ENCODE measurements at regions of chr10 and their contacts with region 1.

Region 1: GRCh38 chr10:77179015-77179695 is 458.5 kb downstream of the KCNMA1 start:
- DNase-seq: peak in 1 of 2 donors; percentile 89
- H3K4me3 ChIP-seq: no peak overlapping the region
- H3K27ac ChIP-seq: peak overlapping the region; percentile 59 to 67
- H3K4me1 ChIP-seq: peaks cover 7 to 22% of the 10 kb centered on the region in 2 donors
- H3K27me3 ChIP-seq: no peaks in the 10 kb centered on the region
- CTCF ChIP-seq: no peak

Region 2: GRCh38 chr10:77236700-77237099 is 57.5 kb after region 1 on chr10:
- intact Hi-C with region 1: loop called (anchors 5 kb)
- DNase-seq: no peak
- H3K4me3 ChIP-seq: no peak overlapping the region
- H3K27ac ChIP-seq: peak overlapping the region in 1 of 2 donors; percentile 78
- H3K4me1 ChIP-seq: peaks cover 8 to 58% of the 10 kb centered on the region in 2 donors
- H3K27me3 ChIP-seq: no peaks in the 10 kb centered on the region
- CTCF ChIP-seq: no peak

Region 3: GRCh38 chr10:77513781-77514331 is 334.7 kb after region 1 on chr10:
- intact Hi-C with region 1: loop called (anchors 5 kb)
- DNase-seq: peak; percentile 70 to 94
- H3K4me3 ChIP-seq: no peak overlapping the region
- H3K27ac ChIP-seq: peak overlapping the region; percentile 82 to 86
- H3K4me1 ChIP-seq: peaks cover 6 to 36% of the 10 kb centered on the region in 2 donors
- H3K27me3 ChIP-seq: no peaks in the 10 kb centered on the region
- CTCF ChIP-seq: no peak

Region 4: GRCh38 chr10:78337646-78338391 is 1158.7 kb after region 1 on chr10:
- intact Hi-C with region 1: no loop called
- DNase-seq: peak in 1 of 2 donors; percentile 30
- H3K4me3 ChIP-seq: no peak overlapping the region
- H3K27ac ChIP-seq: no peak overlapping the region
- H3K4me1 ChIP-seq: peaks cover 6 to 21% of the 10 kb centered on the region in 2 donors
- H3K27me3 ChIP-seq: no peaks in the 10 kb centered on the region
- CTCF ChIP-seq: no peak

Measured in ascending aorta (tissue), 2 donors.